Colonic mucosa (tissue), 4 donors: ENCODE measurements at regions of chr22 and their contacts with region 1.

Region 1: GRCh38 chr22:31977141-31977841 is 33.0 kb downstream of the YWHAH start:
- DNase-seq: peak; percentile 92
- H3K4me3 ChIP-seq: no peak overlapping the region
- H3K27ac ChIP-seq: no peak overlapping the region
- H3K4me1 ChIP-seq: no peaks in the 10 kb centered on the region
- H3K27me3 ChIP-seq: no peaks in the 10 kb centered on the region
- CTCF ChIP-seq: peak; percentile 55

Region 2: DNA sequence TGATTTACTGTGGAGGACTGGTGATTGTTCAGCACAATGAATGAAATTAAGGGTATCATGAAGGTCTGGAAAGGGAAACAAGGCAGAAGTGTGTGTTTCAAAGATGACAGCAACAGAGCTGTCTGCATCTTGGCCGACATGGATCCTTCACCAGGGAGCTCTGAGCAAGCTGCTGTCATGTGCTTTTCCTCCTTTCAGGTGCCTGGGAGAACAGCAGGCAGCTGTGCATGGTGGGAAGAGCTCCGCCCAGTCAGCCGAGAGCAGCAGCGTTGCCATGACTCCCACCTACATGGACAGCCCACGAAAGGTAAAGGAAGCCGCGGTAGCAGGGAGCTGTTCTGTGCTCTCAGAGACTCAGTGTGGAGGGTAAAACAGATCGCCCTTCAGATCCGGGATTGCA is 120.0 kb before region 1 on chr22:
- intact Hi-C with region 1: no loop called
- DNase-seq: peak; percentile 37
- H3K4me3 ChIP-seq: no peak overlapping the region
- H3K27ac ChIP-seq: no peak overlapping the region
- H3K4me1 ChIP-seq: no peaks in the 10 kb centered on the region
- H3K27me3 ChIP-seq: no peaks in the 10 kb centered on the region
- CTCF ChIP-seq: no peak

Region 3: GRCh38 chr22:32080904-32081303 is 103.6 kb after region 1 on chr22:
- intact Hi-C with region 1: loop called (anchors 2 kb)
- DNase-seq: peak; percentile 37
- H3K4me3 ChIP-seq: no peak overlapping the region
- H3K27ac ChIP-seq: no peak overlapping the region
- H3K4me1 ChIP-seq: no peaks in the 10 kb centered on the region
- H3K27me3 ChIP-seq: no peaks in the 10 kb centered on the region
- CTCF ChIP-seq: peak; percentile 61

Region 4: DNA sequence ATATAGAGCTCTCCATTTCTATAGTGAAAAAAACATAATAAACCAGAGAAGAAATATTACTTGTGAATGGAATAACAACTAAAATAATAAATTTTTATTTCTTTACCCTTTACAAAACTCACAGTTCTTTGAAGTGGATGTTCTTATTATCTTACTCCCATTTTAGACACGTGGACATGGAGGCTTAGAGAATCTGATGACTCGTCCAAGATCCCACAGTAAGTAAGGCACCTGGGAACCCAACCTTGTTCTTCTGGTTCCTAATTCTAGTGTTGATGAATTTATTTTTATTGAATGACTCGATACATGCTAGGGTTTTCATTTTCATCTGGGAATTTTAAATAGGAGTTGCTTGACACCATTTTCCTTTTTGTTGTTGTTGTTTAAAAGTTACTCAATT is 485.2 kb after region 1 on chr22:
- intact Hi-C with region 1: no loop called
- DNase-seq: no peak
- H3K4me3 ChIP-seq: no peak overlapping the region
- H3K27ac ChIP-seq: no peak overlapping the region
- H3K4me1 ChIP-seq: no peaks in the 10 kb centered on the region
- H3K27me3 ChIP-seq: peaks cover 5% of the 10 kb centered on the region
- CTCF ChIP-seq: no peak